SK-N-SH (cell line): ENCODE measurements at regions of chr7 and their contacts with region 1.

Region 1: DNA sequence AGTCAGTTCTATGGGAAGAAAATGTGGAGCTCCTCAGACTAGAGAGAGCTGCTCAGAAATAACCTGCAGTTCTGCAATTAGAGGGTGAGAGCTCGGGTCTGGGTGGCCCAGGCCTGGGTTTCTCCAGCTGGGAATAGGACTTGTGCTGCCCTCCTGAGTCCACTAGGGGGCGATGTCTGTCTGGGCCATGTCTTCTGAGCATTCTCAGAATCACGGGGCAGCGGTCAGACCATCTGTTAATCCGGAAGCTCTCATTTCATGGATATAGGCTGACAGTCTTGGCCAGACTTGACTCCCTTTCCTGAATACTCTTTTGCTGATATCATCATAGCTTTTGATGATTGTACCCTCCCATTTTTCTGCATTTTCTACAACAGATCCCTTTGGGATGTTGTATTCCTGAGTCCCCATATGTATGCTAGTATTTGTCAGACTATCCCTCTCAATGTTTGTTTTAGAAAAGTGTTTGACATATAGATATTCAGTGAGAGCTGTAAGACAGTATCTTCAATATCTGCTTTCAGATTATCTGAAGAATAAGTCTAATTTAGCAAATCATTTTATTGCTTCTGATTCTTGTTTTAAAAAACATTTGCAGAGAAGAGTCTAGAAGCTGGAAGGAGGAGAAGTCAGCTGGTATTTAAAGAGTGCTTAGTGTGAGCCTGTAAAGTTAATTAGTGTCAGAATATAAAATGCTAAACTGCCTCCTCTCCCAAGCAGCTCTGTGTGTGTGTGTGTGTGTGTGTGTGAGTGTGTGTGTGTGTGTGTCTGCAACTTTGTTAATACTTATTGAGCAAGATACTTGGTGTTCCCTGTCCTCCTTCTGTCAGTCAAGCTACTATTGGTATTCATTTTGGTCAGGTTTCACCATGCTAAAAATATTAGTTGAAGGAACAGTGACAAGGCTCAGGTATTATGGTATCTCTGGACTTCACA is 38.0 kb downstream of the STARD3NL start:
- DNase-seq: peak; percentile 77
- H3K4me3 ChIP-seq: no peak overlapping the region
- H3K27ac ChIP-seq: peak overlapping the region; percentile 6 to 31; a peak in 2 of 4 replicates
- H3K4me1 ChIP-seq: peaks cover 9 to 18% of the 10 kb centered on the region in 2 experiments; a peak in 3 of 4 replicates
- H3K27me3 ChIP-seq: no peaks in the 10 kb centered on the region
- CTCF ChIP-seq: peak; percentile 100
- EP300 ChIP-seq: no peak; a peak in 1 of 4 replicates
- RAD21 ChIP-seq: peak; percentile 86

Region 2: DNA sequence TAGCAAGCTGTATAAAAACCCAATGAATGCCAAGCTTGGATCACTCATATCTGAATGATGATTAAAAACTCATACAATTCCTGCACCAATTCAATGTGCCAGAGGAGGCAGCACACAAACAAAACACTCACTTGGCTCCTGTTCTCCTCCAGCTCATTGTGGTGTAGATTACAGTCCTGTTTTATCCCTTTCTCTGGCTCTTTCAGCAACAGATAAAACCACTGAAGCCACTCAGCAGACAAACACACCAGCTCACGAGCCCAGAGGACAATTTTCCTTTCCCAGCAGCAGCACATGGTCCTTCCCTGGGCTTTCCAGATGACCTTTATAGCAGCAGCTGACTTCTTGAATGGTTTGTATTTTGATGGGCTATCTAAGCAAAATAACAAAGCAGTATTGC is 145.3 kb before region 1 on chr7:
- CTCF ChIA-PET with region 1: interaction called, 23 read pairs
- POLR2A ChIA-PET with region 1: no interaction called
- DNase-seq: peak; percentile 73
- H3K4me3 ChIP-seq: no peak overlapping the region
- H3K27ac ChIP-seq: peak overlapping the region in 1 of 2 experiments; percentile 69; a peak in 2 of 4 replicates
- H3K4me1 ChIP-seq: no peaks in the 10 kb centered on the region; a peak in 1 of 4 replicates
- H3K27me3 ChIP-seq: no peaks in the 10 kb centered on the region
- CTCF ChIP-seq: peak; percentile 69
- EP300 ChIP-seq: peak in 1 of 2 experiments; percentile 72; a peak in 2 of 4 replicates
- RAD21 ChIP-seq: peak; percentile 54

Region 3: GRCh38 chr7:38160003-38160571 is 55.9 kb before region 1 on chr7:
- CTCF ChIA-PET with region 1: interaction called, 11 read pairs
- POLR2A ChIA-PET with region 1: no interaction called
- DNase-seq: no peak
- H3K4me3 ChIP-seq: no peak overlapping the region
- H3K27ac ChIP-seq: no peak overlapping the region
- H3K4me1 ChIP-seq: peaks cover 0 to 3% of the 10 kb centered on the region in 2 experiments; a peak in 1 of 4 replicates
- H3K27me3 ChIP-seq: no peaks in the 10 kb centered on the region; the same call in 1 of the 2 replicates
- CTCF ChIP-seq: no peak
- EP300 ChIP-seq: peak in 1 of 2 experiments; percentile 20; a peak in 1 of 4 replicates
- RAD21 ChIP-seq: no peak

Region 4: DNA sequence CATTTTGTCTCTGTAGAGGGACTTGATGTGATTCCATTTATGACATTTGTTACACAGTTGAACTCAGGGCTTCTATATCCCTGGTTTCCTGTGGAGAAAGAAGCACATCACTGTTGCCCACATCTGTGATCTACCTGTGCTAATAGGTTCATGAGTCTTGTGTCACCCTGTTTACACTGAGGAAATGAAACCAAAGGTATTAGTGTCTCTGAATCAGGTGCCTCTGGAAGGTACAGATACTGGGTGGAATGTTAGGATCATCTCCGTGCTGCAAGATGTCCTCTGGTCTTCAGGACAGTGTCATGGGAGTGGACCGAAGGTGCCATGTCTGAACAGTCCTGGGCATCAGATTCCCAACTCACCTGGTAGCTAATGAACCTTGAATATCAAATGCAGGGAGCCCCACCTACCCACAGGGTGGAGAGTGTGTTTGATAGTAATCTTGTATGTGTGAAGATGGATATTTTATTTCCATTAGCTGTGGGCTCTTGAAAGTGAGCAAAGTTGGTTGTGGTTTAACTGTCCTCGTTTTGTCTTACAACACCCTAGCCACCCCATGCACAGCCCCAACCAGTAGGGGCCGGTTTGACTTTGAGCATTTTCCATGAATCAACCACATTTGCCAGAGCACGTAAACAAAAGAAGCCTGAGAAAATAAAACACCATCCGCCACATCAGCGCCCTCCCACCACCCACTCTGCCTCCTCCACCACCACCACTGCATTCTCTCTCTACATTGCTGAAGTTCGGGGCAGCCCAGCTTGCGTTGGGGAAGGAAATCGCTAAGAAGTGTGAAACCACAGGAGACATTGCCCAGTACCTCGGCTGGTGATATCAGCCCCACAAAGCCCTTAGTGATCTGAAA is 16.7 kb after region 1 on chr7:
- CTCF ChIA-PET with region 1: interaction called, 63 read pairs
- POLR2A ChIA-PET with region 1: no interaction called
- DNase-seq: no peak
- H3K4me3 ChIP-seq: no peak overlapping the region
- H3K27ac ChIP-seq: no peak overlapping the region
- H3K4me1 ChIP-seq: peaks cover 0 to 4% of the 10 kb centered on the region in 2 experiments; a peak in 1 of 4 replicates
- H3K27me3 ChIP-seq: no peaks in the 10 kb centered on the region
- CTCF ChIP-seq: no peak
- EP300 ChIP-seq: no peak
- RAD21 ChIP-seq: no peak

Region 5: GRCh38 chr7:38318803-38319416 is 102.9 kb after region 1 on chr7:
- CTCF ChIA-PET with region 1: interaction called, 59 read pairs
- POLR2A ChIA-PET with region 1: no interaction called
- DNase-seq: peak; percentile 67
- H3K4me3 ChIP-seq: no peak overlapping the region
- H3K27ac ChIP-seq: no peak overlapping the region
- H3K4me1 ChIP-seq: peaks cover 0 to 8% of the 10 kb centered on the region in 2 experiments; a peak in 1 of 4 replicates
- H3K27me3 ChIP-seq: no peaks in the 10 kb centered on the region
- CTCF ChIP-seq: peak; percentile 72
- EP300 ChIP-seq: no peak
- RAD21 ChIP-seq: peak; percentile 85

Region 6: GRCh38 chr7:38369816-38370493 is 154.0 kb after region 1 on chr7:
- CTCF ChIA-PET with region 1: interaction called, 77 read pairs
- POLR2A ChIA-PET with region 1: no interaction called
- DNase-seq: peak; percentile 74
- H3K4me3 ChIP-seq: no peak overlapping the region; a peak in 1 of 4 replicates
- H3K27ac ChIP-seq: peak overlapping the region in 1 of 2 experiments; percentile 23; a peak in 1 of 4 replicates
- H3K4me1 ChIP-seq: peaks cover 0 to 16% of the 10 kb centered on the region in 2 experiments; a peak in 2 of 4 replicates
- H3K27me3 ChIP-seq: no peaks in the 10 kb centered on the region; the same call in 1 of the 2 replicates
- CTCF ChIP-seq: peak; percentile 98
- EP300 ChIP-seq: no peak
- RAD21 ChIP-seq: peak; percentile 55